ENCODE measurements at regions of chr17 and their contacts with region 1.

Region 1: GRCh38 chr17:32859857-32860525 is 16.9 kb downstream of the MYO1D start:
- DNase-seq: no peak
- ATAC-seq: peak; percentile 97
- H3K4me3 ChIP-seq: no peak overlapping the region
- H3K27ac ChIP-seq: no peak overlapping the region
- H3K4me1 ChIP-seq: peaks cover 6% of the 10 kb centered on the region; the same call in 1 of the 2 replicates
- H3K27me3 ChIP-seq: no peaks in the 10 kb centered on the region
- CTCF ChIP-seq: no peak
- EP300 ChIP-seq: no peak
- POLR2A ChIP-seq: no peak
- RAD21 ChIP-seq: no peak

Region 2: DNA sequence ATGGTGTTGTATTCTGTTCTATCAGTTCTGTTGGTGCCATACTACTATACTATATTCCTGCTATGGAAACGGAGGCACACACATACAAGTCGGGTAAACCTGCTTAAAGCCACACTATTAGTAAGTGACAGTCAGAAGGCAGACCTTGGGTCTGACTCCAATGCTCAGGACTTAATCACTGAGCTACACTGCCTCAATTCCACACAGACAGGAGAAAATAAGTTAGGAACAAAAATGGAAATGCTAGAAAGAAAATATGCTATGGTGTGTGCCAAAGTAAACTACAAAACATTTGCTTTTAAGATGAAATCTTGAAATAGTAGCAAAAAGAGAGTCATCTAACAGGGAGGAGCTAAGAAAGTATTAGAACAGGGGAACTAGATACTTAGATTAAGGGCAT is 31.2 kb before region 1 on chr17:
- CTCF ChIA-PET with region 1: interaction called, 7 read pairs
- POLR2A ChIA-PET with region 1: interaction called, 21 read pairs
- RAD21 ChIA-PET with region 1: interaction called, 46 read pairs
- SMC1A ChIA-PET with region 1: interaction called, 231 read pairs
- in situ Hi-C with region 1: no loop called
- intact Hi-C with region 1: loop called (anchors 5 kb)
- DNase-seq: no peak
- ATAC-seq: peak; percentile 16
- H3K4me3 ChIP-seq: peak overlapping the region; percentile 35
- H3K27ac ChIP-seq: peak overlapping the region; percentile 88
- H3K4me1 ChIP-seq: peaks cover 48% of the 10 kb centered on the region
- H3K27me3 ChIP-seq: no peaks in the 10 kb centered on the region
- CTCF ChIP-seq: no peak
- EP300 ChIP-seq: no peak
- POLR2A ChIP-seq: no peak
- RAD21 ChIP-seq: no peak

Region 3: GRCh38 chr17:32835291-32835761 is 24.7 kb before region 1 on chr17:
- CTCF ChIA-PET with region 1: interaction called, 10 read pairs
- POLR2A ChIA-PET with region 1: interaction called, 21 read pairs
- RAD21 ChIA-PET with region 1: interaction called, 46 read pairs
- SMC1A ChIA-PET with region 1: interaction called, 231 read pairs
- in situ Hi-C with region 1: no loop called
- intact Hi-C with region 1: no loop called
- DNase-seq: peak; percentile 70
- ATAC-seq: peak; percentile 84
- H3K4me3 ChIP-seq: peak overlapping the region; percentile 60
- H3K27ac ChIP-seq: peak overlapping the region; percentile 95
- H3K4me1 ChIP-seq: peaks cover 41% of the 10 kb centered on the region
- H3K27me3 ChIP-seq: no peaks in the 10 kb centered on the region
- CTCF ChIP-seq: no peak
- EP300 ChIP-seq: 0 out of 4 replicates have a peak, but pooled peaks of 1 of the 2 experiments have one; percentile 10
- POLR2A ChIP-seq: no peak
- RAD21 ChIP-seq: no peak

Region 4: DNA sequence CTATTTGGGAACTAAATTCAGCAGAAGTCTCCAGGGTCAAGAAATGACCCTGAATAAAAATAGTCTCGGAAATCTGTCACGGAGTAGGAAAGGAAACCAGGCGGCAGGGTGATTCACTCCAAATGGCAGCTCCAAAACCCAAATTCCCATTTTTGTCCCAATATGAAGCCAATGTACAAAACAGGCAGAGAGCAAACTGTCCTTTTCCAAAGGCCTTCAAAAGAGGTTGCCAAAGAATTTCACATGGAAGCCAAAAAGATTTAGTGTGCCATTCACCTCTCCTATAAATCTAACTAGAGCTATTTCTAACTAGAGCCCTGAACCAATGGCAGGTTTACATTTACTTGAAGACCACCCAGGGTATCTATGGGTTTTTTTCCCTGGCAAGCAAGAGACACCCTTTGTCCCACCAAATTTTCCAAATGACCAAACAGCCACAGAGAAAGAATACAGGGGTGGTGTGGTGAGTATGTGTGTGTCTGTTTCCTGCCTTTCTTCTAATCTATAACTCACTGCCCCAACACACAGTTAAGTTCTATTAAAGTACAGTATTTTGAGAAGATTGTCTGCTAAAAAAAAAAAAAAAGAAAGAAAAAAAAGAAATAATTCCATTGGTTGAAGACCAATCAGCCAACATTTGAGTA is 10.2 kb after region 1 on chr17:
- CTCF ChIA-PET with region 1: interaction called, 112 read pairs
- POLR2A ChIA-PET with region 1: interaction called, 21 read pairs
- RAD21 ChIA-PET with region 1: interaction called, 20 read pairs
- SMC1A ChIA-PET with region 1: interaction called, 127 read pairs
- in situ Hi-C with region 1: no loop called
- intact Hi-C with region 1: no loop called
- DNase-seq: no peak
- ATAC-seq: no peak
- H3K4me3 ChIP-seq: no peak overlapping the region
- H3K27ac ChIP-seq: no peak overlapping the region
- H3K4me1 ChIP-seq: no peaks in the 10 kb centered on the region
- H3K27me3 ChIP-seq: no peaks in the 10 kb centered on the region
- CTCF ChIP-seq: no peak
- EP300 ChIP-seq: no peak
- POLR2A ChIP-seq: no peak
- RAD21 ChIP-seq: no peak

Region 5: GRCh38 chr17:32976131-32976530 is 116.1 kb after region 1 on chr17:
- CTCF ChIA-PET with region 1: no interaction called
- POLR2A ChIA-PET with region 1: no interaction called
- RAD21 ChIA-PET with region 1: no interaction called
- SMC1A ChIA-PET with region 1: no interaction called
- in situ Hi-C with region 1: no loop called
- intact Hi-C with region 1: no loop called
- DNase-seq: no peak
- ATAC-seq: no peak
- H3K4me3 ChIP-seq: no peak overlapping the region
- H3K27ac ChIP-seq: no peak overlapping the region
- H3K4me1 ChIP-seq: 0 out of 2 replicates have a peak, but pooled peaks cover 2% of the 10 kb centered on the region
- H3K27me3 ChIP-seq: no peaks in the 10 kb centered on the region
- CTCF ChIP-seq: no peak
- EP300 ChIP-seq: no peak
- POLR2A ChIP-seq: no peak
- RAD21 ChIP-seq: no peak

Measured in GM12878 (cell line).